K562 (cell line): ENCODE measurements at regions of chr11 and their contacts with region 1.

Region 1: GRCh38 chr11:47725445-47726442 is 10.6 kb upstream of the AGBL2 start:
- DNase-seq: no peak
- ATAC-seq: no peak
- H3K4me3 ChIP-seq: no peak overlapping the region
- H3K27ac ChIP-seq: no peak overlapping the region
- H3K4me1 ChIP-seq: no peaks in the 10 kb centered on the region
- H3K27me3 ChIP-seq: no peaks in the 10 kb centered on the region
- CTCF ChIP-seq: no peak
- EP300 ChIP-seq: no peak
- POLR2A ChIP-seq: peak; percentile 38; the same call in 1 of the 2 replicates
- RAD21 ChIP-seq: no peak

Region 2: GRCh38 chr11:47715082-47715669 is 10.6 kb before region 1 on chr11 and contains the start of gene AGBL2:
- CTCF ChIA-PET with region 1: no interaction called
- POLR2A ChIA-PET with region 1: interaction called, 26 read pairs
- in situ Hi-C with region 1: no loop called
- intact Hi-C with region 1: no loop called
- DNase-seq: peak; percentile 72 to 77 (median 74)
- ATAC-seq: peak; percentile 94
- H3K4me3 ChIP-seq: peak within 1 kb of the TSS; percentile 36
- H3K27ac ChIP-seq: peak within 1 kb of the TSS; percentile 43; the same call in 2 of the 3 replicates
- H3K4me1 ChIP-seq: peaks cover 0 to 7% of the 10 kb centered on the region in 2 experiments; a peak in 1 of 5 replicates
- H3K27me3 ChIP-seq: no peaks in the 10 kb centered on the region
- CTCF ChIP-seq: no peak
- EP300 ChIP-seq: no peak
- POLR2A ChIP-seq: peak; percentile 66
- RAD21 ChIP-seq: no peak
- polyA plus RNA-seq, gene AGBL2: 0.57 to 0.73 TPM